Activated CD8-positive, alpha-beta memory T cell treated with anti-CD3 and anti-CD28 coated beads, Interleukin-2, amount 10 ng/mL, durations not matched to agents 7 days and 5 days (primary cell): ENCODE measurements at regions of chr19 and their contacts with region 1.

Region 1: DNA sequence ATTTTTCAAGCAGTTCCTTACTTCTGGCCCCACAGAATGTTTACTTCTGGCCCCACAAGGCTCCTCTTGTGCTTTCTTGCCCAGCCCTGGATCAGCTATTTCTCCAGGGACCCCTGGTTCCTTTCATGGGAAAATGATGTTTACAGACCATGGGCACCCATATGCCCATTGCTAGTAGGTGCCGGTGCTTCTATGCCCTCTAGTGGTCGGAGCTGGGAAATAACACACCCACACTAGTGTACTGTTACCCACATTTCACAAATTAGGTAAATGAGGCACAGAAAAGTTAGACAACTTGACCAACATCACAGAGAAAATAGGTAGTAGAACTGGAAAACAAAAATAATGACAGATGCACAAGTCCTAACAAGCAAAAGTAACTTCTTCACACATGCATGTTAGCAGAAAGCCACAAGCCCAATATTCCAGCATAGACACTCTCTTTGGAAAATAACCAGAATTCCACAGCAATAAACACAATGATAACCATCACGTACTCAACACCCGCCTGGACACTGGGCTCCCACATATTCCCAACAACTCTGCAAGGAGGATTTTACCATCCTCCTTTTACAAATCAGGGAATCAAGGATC is 1.3 kb upstream of the CEACAM6 start:
- DNase-seq: peak; percentile 76
- ATAC-seq: peak; percentile 87
- H3K4me3 Mint-ChIP-seq: no peak overlapping the region
- H3K27ac Mint-ChIP-seq: no peak overlapping the region
- H3K4me1 Mint-ChIP-seq: peaks cover 2% of the 10 kb centered on the region
- H3K27me3 Mint-ChIP-seq: peaks cover 42% of the 10 kb centered on the region

Region 2: DNA sequence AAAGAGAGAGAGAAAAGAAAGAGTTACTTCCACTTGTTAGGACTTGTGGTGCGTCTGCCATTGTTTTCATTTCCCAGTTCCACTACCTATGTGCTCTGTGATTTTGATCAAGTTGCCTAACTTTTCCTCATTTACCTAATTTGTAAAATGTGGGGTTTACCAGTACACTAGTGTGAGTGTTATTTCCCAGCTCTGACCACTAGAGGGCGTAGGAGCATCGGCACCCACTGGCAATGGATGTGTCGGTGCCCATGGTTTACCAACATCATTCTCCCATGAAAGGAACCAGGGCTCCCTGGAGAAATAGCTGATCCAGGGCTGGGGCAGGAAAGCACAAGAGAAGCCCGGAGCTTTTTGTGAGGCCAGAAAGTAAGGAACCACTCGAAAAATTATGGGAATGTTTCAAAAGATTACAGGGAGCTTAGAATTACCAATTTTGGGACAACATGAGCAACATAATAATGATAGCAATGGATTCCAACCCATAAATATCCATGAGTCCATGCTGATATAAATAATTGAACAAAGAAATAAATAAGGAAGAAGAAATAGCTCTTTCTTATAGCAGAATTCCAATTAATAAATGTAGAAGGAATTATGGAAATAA is 112.1 kb before region 1 on chr19:
- CTCF ChIA-PET with region 1: interaction called, 17 read pairs
- DNase-seq: peak; percentile 74
- ATAC-seq: peak; percentile 73
- H3K4me3 Mint-ChIP-seq: no peak overlapping the region
- H3K27ac Mint-ChIP-seq: no peak overlapping the region
- H3K4me1 Mint-ChIP-seq: no peaks in the 10 kb centered on the region
- H3K27me3 Mint-ChIP-seq: peaks cover 22% of the 10 kb centered on the region

Region 3: GRCh38 chr19:41734617-41735016 is 19.4 kb before region 1 on chr19:
- CTCF ChIA-PET with region 1: interaction called, 20 read pairs
- DNase-seq: no peak
- ATAC-seq: no peak
- H3K4me3 Mint-ChIP-seq: no peak overlapping the region
- H3K27ac Mint-ChIP-seq: no peak overlapping the region
- H3K4me1 Mint-ChIP-seq: no peaks in the 10 kb centered on the region
- H3K27me3 Mint-ChIP-seq: peaks cover 66% of the 10 kb centered on the region

Region 4: GRCh38 chr19:41767115-41767514 is 13.1 kb after region 1 on chr19:
- CTCF ChIA-PET with region 1: interaction called, 34 read pairs
- DNase-seq: no peak
- ATAC-seq: no peak
- H3K4me3 Mint-ChIP-seq: no peak overlapping the region
- H3K27ac Mint-ChIP-seq: no peak overlapping the region
- H3K4me1 Mint-ChIP-seq: peaks cover 2% of the 10 kb centered on the region
- H3K27me3 Mint-ChIP-seq: peaks cover 57% of the 10 kb centered on the region

Region 5: GRCh38 chr19:41785653-41786052 is 31.6 kb after region 1 on chr19:
- CTCF ChIA-PET with region 1: interaction called, 136 read pairs
- DNase-seq: peak; percentile 83
- ATAC-seq: peak; percentile 87
- H3K4me3 Mint-ChIP-seq: no peak overlapping the region
- H3K27ac Mint-ChIP-seq: no peak overlapping the region
- H3K4me1 Mint-ChIP-seq: peaks cover 17% of the 10 kb centered on the region
- H3K27me3 Mint-ChIP-seq: peaks cover 49% of the 10 kb centered on the region

Region 6: GRCh38 chr19:41821003-41821735 is 67.1 kb after region 1 on chr19:
- CTCF ChIA-PET with region 1: interaction called, 24 read pairs
- DNase-seq: peak; percentile 56
- ATAC-seq: peak; percentile 78
- H3K4me3 Mint-ChIP-seq: no peak overlapping the region
- H3K27ac Mint-ChIP-seq: no peak overlapping the region
- H3K4me1 Mint-ChIP-seq: peaks cover 3% of the 10 kb centered on the region
- H3K27me3 Mint-ChIP-seq: peaks cover 39% of the 10 kb centered on the region